ENCODE measurements at regions of chr1 and their contacts with region 1.

Region 1: GRCh38 chr1:17922833-17923232 is 167.7 kb downstream of the ACTL8 start:
- DNase-seq: peak; percentile 72
- ATAC-seq: peak; percentile 59
- H3K4me3 Mint-ChIP-seq: no peak overlapping the region
- H3K27ac Mint-ChIP-seq: no peak overlapping the region
- H3K4me1 Mint-ChIP-seq: peaks cover 6% of the 10 kb centered on the region
- H3K27me3 Mint-ChIP-seq: peaks cover 6% of the 10 kb centered on the region
- CTCF ChIP-seq: peak; percentile 48

Region 2: GRCh38 chr1:17795836-17796645 is 126.8 kb before region 1 on chr1:
- CTCF ChIA-PET with region 1: no interaction called
- POLR2A ChIA-PET with region 1: no interaction called
- DNase-seq: no peak
- ATAC-seq: no peak
- H3K4me3 Mint-ChIP-seq: no peak overlapping the region
- H3K27ac Mint-ChIP-seq: no peak overlapping the region
- H3K4me1 Mint-ChIP-seq: no peaks in the 10 kb centered on the region
- H3K27me3 Mint-ChIP-seq: no peaks in the 10 kb centered on the region; the same call in 1 of the 2 replicates
- CTCF ChIP-seq: no peak

Region 3: GRCh38 chr1:17909634-17910033 is 13.2 kb before region 1 on chr1:
- CTCF ChIA-PET with region 1: interaction called, 12 read pairs
- POLR2A ChIA-PET with region 1: no interaction called
- DNase-seq: peak; percentile 74
- ATAC-seq: peak; percentile 90
- H3K4me3 Mint-ChIP-seq: no peak overlapping the region
- H3K27ac Mint-ChIP-seq: no peak overlapping the region
- H3K4me1 Mint-ChIP-seq: peaks cover 11% of the 10 kb centered on the region
- H3K27me3 Mint-ChIP-seq: peaks cover 12% of the 10 kb centered on the region
- CTCF ChIP-seq: no peak

Region 4: DNA sequence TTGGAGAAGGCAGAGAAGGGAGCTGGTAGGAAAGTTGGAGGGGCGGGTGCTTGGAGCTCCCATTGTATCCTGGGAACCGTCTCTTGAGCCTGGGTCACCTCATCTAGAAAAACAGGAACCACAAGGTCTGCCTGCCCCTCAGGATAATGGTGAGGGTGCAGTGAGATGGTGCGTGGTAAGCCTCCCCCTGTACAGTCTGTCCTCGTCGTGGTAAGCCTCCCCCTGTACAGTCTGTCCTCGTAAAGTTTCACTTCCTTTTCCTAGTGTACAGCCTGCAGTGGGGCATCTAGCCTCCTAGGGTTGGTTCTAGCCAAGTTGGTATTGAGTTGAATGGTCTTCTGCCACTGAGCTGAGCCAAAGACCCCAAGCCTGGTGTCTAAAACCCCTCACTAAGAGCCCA is 118.3 kb after region 1 on chr1:
- CTCF ChIA-PET with region 1: interaction called, 26 read pairs
- POLR2A ChIA-PET with region 1: no interaction called
- DNase-seq: no peak
- ATAC-seq: no peak
- H3K4me3 Mint-ChIP-seq: no peak overlapping the region
- H3K27ac Mint-ChIP-seq: no peak overlapping the region
- H3K4me1 Mint-ChIP-seq: peaks cover 12% of the 10 kb centered on the region
- H3K27me3 Mint-ChIP-seq: peaks cover 26% of the 10 kb centered on the region
- CTCF ChIP-seq: no peak

Region 5: DNA sequence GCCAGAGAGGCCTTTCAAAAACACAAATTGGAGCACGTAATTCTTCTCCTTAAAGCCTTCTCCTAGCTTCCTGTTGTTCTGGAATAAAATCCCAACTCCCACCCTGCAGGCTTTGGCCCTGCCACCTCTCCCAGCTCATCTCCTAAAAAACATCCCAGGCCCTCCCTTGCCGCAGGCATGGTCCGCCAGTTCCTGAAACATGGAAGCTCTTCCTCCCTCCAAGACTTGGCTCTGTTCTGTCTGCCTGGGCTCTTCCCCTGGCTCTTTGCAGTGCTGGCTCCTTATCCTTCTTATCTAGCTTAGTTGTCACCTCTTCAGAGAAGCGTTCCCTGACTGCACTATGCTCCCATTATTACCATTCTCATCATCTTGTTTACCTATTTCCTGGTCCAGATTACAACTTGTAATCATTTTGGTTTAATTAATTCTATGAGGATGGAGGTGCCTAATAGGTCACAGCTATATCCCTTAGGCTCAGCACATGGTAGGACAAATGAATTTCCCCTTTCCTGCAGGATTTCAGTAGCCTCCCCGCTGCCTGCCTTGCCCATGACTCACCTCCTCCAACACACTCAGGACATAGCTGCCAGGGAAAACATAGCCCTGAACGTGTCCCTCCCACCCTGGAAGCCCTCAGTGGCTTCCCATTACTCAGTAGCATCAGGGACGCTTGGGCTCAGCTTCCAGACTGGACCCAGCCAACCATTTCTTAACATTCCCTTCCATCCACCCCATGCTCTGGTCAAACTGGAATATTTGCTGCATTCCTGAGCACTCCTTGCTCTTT is 169.0 kb after region 1 on chr1:
- CTCF ChIA-PET with region 1: interaction called, 12 read pairs
- POLR2A ChIA-PET with region 1: no interaction called
- DNase-seq: no peak
- ATAC-seq: no peak
- H3K4me3 Mint-ChIP-seq: no peak overlapping the region
- H3K27ac Mint-ChIP-seq: no peak overlapping the region
- H3K4me1 Mint-ChIP-seq: peaks cover 56% of the 10 kb centered on the region
- H3K27me3 Mint-ChIP-seq: peaks cover 57% of the 10 kb centered on the region
- CTCF ChIP-seq: no peak

Region 6: DNA sequence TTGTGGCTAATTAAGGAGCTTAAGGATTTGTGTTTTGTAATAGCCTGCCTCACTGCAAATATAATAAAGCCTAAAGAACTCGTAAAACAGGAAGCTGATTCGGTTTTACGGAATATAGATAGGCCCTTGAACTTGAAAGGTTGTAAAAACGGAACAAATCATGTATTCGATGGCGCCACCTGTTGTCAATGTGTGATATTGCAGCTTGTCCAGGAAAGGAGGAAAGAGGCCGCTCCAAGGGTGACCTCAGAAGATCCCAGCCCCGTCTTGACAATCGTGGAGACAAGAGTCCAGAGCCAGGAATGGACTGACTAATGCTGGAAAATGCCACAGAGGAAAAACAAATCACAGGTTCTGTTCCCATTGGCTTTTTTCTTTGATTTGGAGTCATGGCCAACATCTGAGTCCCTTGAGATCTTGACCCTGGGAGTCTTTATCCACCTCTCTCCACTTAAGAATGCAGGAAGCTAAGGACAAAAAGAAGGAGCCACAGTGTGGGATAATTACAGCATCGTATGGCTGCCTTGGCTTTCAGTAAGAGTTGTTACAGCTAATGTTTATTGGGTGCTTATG is 177.7 kb after region 1 on chr1:
- CTCF ChIA-PET with region 1: interaction called, 17 read pairs
- POLR2A ChIA-PET with region 1: interaction called, 4 read pairs
- DNase-seq: peak; percentile 77
- ATAC-seq: peak; percentile 69
- H3K4me3 Mint-ChIP-seq: no peak overlapping the region
- H3K27ac Mint-ChIP-seq: no peak overlapping the region
- H3K4me1 Mint-ChIP-seq: peaks cover 14% of the 10 kb centered on the region
- H3K27me3 Mint-ChIP-seq: peaks cover 82% of the 10 kb centered on the region
- CTCF ChIP-seq: peak; percentile 71